ENCODE measurements at regions of chr14 and their contacts with region 1.

Region 1: GRCh38 chr14:39034481-39035296 is 68.3 kb downstream of the SEC23A start:
- DNase-seq: no peak
- H3K4me3 ChIP-seq: no peak overlapping the region
- H3K27me3 ChIP-seq: no peaks in the 10 kb centered on the region
- CTCF ChIP-seq: peak; percentile 46

Region 2: DNA sequence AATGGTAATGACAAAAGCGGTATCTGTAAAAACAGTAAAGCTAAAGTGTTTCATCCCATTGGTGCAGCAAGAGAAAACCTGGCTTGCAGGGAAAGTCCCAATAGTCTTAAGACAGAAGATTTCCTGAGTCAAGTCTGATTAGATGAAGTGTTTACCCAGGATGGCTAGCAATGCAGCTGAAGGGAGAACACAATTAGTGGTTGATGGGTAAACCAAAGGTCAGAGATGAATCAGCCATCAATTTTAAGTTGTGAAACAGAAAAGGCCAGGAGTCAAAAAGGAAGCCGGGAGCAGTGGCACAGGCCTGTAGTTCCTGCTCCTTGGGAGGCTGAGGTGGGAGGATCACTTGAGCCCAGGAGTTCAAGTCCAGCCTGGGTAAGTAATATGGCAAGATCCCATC is 15.7 kb after region 1 on chr14:
- CTCF ChIA-PET with region 1: interaction called, 13 read pairs
- POLR2A ChIA-PET with region 1: no interaction called
- DNase-seq: peak; percentile 35
- H3K4me3 ChIP-seq: no peak overlapping the region
- H3K27me3 ChIP-seq: no peaks in the 10 kb centered on the region
- CTCF ChIP-seq: no peak

Region 3: GRCh38 chr14:39154594-39155189 is 120.0 kb after region 1 on chr14:
- CTCF ChIA-PET with region 1: no interaction called
- POLR2A ChIA-PET with region 1: no interaction called
- DNase-seq: no peak
- H3K4me3 ChIP-seq: no peak overlapping the region
- H3K27me3 ChIP-seq: no peaks in the 10 kb centered on the region
- CTCF ChIP-seq: no peak

Measured in BJ (cell line).